ENCODE measurements at regions of chr1 and their contacts with region 1.

Region 1: DNA sequence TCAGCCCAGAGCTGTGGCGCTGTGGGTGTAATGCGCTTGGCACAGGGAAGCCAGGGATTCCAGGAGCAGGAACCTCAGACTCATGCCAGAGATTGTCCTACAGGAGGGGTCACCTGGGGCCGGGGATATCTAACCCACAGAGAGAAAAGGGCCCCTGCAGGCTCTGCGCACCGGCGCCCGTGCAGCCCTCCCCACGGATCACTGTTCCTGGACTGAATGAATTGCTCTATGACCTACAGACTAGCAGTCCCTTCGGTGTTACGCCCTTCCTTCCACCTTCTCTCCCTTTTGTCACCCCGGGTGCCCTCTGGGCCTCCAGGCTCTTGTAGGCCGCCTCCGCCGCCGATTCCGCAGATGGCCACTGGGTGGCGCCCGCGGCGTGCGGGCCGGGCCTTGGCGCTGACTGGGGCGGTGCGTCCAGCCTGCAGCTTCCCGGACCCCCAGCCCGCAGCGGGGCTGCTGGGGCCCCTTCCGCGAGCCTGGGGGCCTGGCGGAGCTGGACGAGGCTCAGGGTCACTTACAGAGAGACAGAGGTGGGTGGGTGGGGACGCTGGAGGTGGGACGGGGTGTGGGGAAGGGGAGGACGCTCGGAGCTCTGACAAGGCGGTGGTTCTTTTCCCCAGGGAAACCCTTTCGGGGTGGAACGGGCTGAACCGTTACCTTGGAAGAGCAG is 101.3 kb downstream of the IER5 start:
- DNase-seq: no peak

Region 2: DNA sequence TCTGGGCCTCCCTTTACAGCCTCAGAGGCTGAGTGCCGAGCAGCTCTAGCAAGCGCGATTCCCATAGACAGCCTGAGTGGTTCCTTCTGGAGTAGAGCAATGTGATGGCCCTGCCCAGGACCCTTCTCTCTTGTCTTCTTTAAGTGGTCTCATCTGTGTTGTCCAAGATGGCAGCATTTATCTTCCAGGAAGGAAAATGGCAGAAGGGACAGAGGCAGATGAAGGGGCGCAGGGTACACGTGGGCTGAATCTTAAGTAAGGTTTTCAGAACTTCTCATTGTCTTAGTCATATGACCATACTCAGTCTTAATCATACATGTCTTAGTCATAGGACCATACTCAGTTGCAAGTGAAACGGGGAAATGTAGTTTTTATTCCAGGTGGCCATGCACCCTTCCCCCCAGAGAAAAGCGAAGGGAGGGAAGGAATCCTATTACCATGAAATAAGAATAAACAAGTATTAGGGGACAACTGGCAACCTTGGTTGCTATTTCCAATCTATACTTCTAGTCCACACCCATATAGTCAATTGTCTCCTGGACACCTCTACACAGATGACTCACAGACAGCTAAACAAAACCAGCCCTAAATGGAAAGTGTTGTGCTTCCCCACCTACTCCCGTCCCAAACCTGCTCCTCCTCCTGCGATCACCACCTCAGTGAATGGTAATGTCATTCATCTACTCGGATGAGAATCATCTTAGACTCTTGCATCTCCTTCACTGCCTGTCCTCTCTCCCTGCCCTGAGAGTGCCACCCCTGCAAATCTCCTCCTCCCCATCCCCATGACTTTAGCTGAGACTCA is 617.8 kb before region 1 on chr1:
- intact Hi-C with region 1: no loop called
- DNase-seq: no peak

Region 3: GRCh38 chr1:180680558-180681144 is 509.2 kb before region 1 on chr1:
- intact Hi-C with region 1: no loop called
- DNase-seq: no peak

Region 4: GRCh38 chr1:181128592-181129497 is 61.0 kb before region 1 on chr1:
- intact Hi-C with region 1: no loop called
- DNase-seq: no peak

Region 5: GRCh38 chr1:181424786-181425403 is 235.1 kb after region 1 on chr1:
- intact Hi-C with region 1: loop called (anchors 2 kb)
- DNase-seq: peak; percentile 81